ENCODE measurements at regions of chr17 and their contacts with region 1.

Region 1: DNA sequence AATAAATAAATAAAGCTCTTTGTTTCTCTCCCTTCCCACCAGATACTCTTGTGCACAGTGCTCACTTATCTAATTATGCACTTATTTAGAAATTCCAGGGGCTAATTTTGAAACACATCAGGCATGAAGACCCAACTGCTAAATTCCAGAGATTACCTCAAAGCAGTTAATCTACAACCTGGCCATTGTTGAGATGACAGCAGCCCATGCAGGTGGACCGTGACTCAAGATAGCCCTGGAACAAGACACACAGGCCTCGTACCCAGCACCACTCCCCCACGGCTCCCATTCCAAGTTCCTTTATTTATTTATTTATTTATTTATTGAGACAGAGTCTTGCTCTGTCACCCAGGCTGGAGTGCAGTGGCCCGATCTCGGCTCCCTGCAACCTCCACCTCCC is 60.1 kb upstream of the NPEPPS start:
- DNase-seq: no peak
- ATAC-seq: no peak
- H3K4me3 ChIP-seq: no peak overlapping the region
- H3K4me3 Mint-ChIP-seq: no peak overlapping the region
- H3K27ac ChIP-seq: no peak overlapping the region
- H3K27ac Mint-ChIP-seq: no peak overlapping the region
- H3K4me1 ChIP-seq: no peaks in the 10 kb centered on the region
- H3K4me1 Mint-ChIP-seq: no peaks in the 10 kb centered on the region
- H3K27me3 ChIP-seq: no peaks in the 10 kb centered on the region
- H3K27me3 Mint-ChIP-seq: no peaks in the 10 kb centered on the region
- CTCF ChIP-seq: no peak

Region 2: GRCh38 chr17:47604598-47604927 is 133.7 kb after region 1 on chr17:
- CTCF ChIA-PET with region 1: no interaction called
- POLR2A ChIA-PET with region 1: no interaction called
- intact Hi-C with region 1: loop called in 1 of 2 experiments (anchors 10 kb)
- DNase-seq: no peak
- ATAC-seq: no peak
- H3K4me3 ChIP-seq: no peak overlapping the region
- H3K4me3 Mint-ChIP-seq: no peak overlapping the region
- H3K27ac ChIP-seq: no peak overlapping the region
- H3K27ac Mint-ChIP-seq: no peak overlapping the region
- H3K4me1 ChIP-seq: no peaks in the 10 kb centered on the region
- H3K4me1 Mint-ChIP-seq: no peaks in the 10 kb centered on the region
- H3K27me3 ChIP-seq: no peaks in the 10 kb centered on the region
- H3K27me3 Mint-ChIP-seq: no peaks in the 10 kb centered on the region
- CTCF ChIP-seq: no peak

Region 3: GRCh38 chr17:47733047-47733673 is 262.3 kb after region 1 on chr17 and contains the start of gene TBX21:
- CTCF ChIA-PET with region 1: no interaction called
- POLR2A ChIA-PET with region 1: no interaction called
- intact Hi-C with region 1: no loop called
- DNase-seq: peak; percentile 79 to 95 (median 87)
- ATAC-seq: peak; percentile 91
- H3K4me3 ChIP-seq: peak within 1 kb of the TSS; percentile 90
- H3K4me3 Mint-ChIP-seq: peak within 1 kb of the TSS; percentile 95
- H3K27ac ChIP-seq: peak within 1 kb of the TSS in 1 of 2 donors; percentile 64
- H3K27ac Mint-ChIP-seq: peak within 1 kb of the TSS; percentile 85
- H3K4me1 ChIP-seq: peaks cover 67% of the 10 kb centered on the region
- H3K4me1 Mint-ChIP-seq: peaks cover 28% of the 10 kb centered on the region
- H3K27me3 ChIP-seq: peaks cover 0 to 2% of the 10 kb centered on the region in 2 experiments
- H3K27me3 Mint-ChIP-seq: peaks cover 11% of the 10 kb centered on the region
- CTCF ChIP-seq: peak; percentile 64
- total RNA-seq, gene TBX21: 10.6 to 12.3 TPM

Measured in CD4-positive, alpha-beta T cell (primary cell).